GM12878 (cell line): ENCODE measurements at regions of chr15 and their contacts with region 1.

Region 1: GRCh38 chr15:74913041-74913440 is 6.4 kb upstream of the FAM219B start:
- DNase-seq: no peak
- ATAC-seq: no peak
- H3K4me3 ChIP-seq: no peak overlapping the region
- H3K27ac ChIP-seq: no peak overlapping the region
- H3K4me1 ChIP-seq: no peaks in the 10 kb centered on the region
- H3K27me3 ChIP-seq: no peaks in the 10 kb centered on the region
- CTCF ChIP-seq: no peak
- EP300 ChIP-seq: no peak
- POLR2A ChIP-seq: no peak
- RAD21 ChIP-seq: no peak

Region 2: DNA sequence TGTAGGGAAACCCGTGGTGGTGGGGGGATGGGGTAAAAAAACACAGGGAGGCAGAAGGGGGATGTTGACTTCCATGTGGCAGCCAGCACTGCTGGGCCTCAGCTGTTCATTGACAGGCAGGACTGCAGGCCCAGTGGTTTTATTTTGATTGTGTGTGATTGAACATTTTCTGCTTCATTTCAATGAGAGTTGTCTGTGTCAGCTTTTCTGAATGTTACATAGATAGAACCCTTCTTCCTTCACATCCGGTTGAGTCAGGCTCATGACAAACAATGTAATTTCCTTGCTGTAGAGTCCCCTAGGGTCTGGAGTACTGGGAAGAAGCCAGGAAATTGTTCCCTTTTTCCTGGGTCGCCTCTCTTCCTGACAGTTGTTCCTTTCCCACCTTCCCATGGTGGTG is 51.8 kb after region 1 on chr15:
- CTCF ChIA-PET with region 1: no interaction called
- POLR2A ChIA-PET with region 1: no interaction called
- RAD21 ChIA-PET with region 1: no interaction called
- SMC1A ChIA-PET with region 1: no interaction called
- in situ Hi-C with region 1: loop called (anchors 5 kb)
- intact Hi-C with region 1: no loop called
- DNase-seq: no peak
- ATAC-seq: no peak
- H3K4me3 ChIP-seq: no peak overlapping the region
- H3K27ac ChIP-seq: no peak overlapping the region
- H3K4me1 ChIP-seq: peaks cover 4% of the 10 kb centered on the region; the same call in 1 of the 2 replicates
- H3K27me3 ChIP-seq: 0 out of 4 replicates have a peak, but pooled peaks cover 0 to 2% of the 10 kb centered on the region in 2 experiments
- CTCF ChIP-seq: no peak
- EP300 ChIP-seq: no peak
- POLR2A ChIP-seq: no peak
- RAD21 ChIP-seq: no peak